ENCODE measurements at regions of chr5 and their contacts with region 1.

Region 1: GRCh38 chr5:35926389-35927051 is 11.9 kb downstream of the CAPSL start:
- DNase-seq: no peak
- ATAC-seq: peak; percentile 76
- H3K4me3 Mint-ChIP-seq: no peak overlapping the region
- H3K27ac Mint-ChIP-seq: no peak overlapping the region
- H3K4me1 Mint-ChIP-seq: peaks cover 7% of the 10 kb centered on the region
- H3K27me3 Mint-ChIP-seq: peaks cover 21% of the 10 kb centered on the region
- CTCF ChIP-seq: peak; percentile 59

Region 2: GRCh38 chr5:34474573-34475021 is 1451.9 kb before region 1 on chr5:
- CTCF ChIA-PET with region 1: no interaction called
- POLR2A ChIA-PET with region 1: no interaction called
- intact Hi-C with region 1: loop called (anchors 2 kb)
- DNase-seq: no peak
- ATAC-seq: peak; percentile 70
- H3K4me3 Mint-ChIP-seq: no peak overlapping the region
- H3K27ac Mint-ChIP-seq: no peak overlapping the region
- H3K4me1 Mint-ChIP-seq: no peaks in the 10 kb centered on the region
- H3K27me3 Mint-ChIP-seq: peaks cover 8% of the 10 kb centered on the region
- CTCF ChIP-seq: peak; percentile 88

Region 3: DNA sequence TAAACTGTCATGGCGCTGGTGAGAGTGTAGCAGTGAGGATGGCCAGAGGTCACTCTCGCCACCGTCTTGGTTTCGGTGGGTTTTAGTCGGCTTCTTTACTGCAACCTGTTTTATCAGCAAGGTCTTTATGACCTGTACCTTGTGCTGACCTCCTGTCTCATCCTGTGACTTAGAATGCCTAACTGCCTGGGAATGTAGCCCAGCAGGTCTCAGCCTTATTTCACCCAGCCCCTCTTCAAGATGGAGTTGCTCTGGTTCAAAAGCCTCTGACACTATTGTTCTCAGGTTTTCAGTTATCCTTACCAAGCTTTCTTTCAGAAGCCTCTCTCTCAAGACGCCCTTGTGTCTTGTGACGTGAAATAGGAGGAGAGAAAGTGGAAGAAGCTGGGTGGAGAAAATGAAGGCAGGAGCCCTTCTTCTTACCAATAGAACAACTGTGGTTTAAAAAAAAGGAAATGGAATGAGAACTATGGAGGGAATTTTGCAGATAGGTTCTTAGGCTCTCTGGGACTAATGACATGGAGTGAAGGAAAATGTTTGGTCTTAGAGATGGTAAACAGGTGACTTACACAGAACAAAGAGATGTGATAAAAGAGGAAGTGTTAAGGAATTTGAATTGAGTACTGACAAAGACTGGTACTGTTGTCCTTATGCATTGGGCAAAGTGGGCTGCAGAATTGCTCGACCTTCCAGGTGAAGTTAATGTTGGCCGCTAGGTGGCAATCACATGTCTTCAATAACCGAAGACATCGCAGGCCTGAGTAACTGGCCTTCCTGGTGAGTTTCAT is 1403.7 kb before region 1 on chr5:
- CTCF ChIA-PET with region 1: interaction called, 6 read pairs
- POLR2A ChIA-PET with region 1: no interaction called
- intact Hi-C with region 1: loop called (anchors 1 kb)
- DNase-seq: no peak
- ATAC-seq: peak; percentile 71
- H3K4me3 Mint-ChIP-seq: no peak overlapping the region
- H3K27ac Mint-ChIP-seq: no peak overlapping the region
- H3K4me1 Mint-ChIP-seq: peaks cover 2% of the 10 kb centered on the region
- H3K27me3 Mint-ChIP-seq: no peaks in the 10 kb centered on the region
- CTCF ChIP-seq: no peak

Region 4: DNA sequence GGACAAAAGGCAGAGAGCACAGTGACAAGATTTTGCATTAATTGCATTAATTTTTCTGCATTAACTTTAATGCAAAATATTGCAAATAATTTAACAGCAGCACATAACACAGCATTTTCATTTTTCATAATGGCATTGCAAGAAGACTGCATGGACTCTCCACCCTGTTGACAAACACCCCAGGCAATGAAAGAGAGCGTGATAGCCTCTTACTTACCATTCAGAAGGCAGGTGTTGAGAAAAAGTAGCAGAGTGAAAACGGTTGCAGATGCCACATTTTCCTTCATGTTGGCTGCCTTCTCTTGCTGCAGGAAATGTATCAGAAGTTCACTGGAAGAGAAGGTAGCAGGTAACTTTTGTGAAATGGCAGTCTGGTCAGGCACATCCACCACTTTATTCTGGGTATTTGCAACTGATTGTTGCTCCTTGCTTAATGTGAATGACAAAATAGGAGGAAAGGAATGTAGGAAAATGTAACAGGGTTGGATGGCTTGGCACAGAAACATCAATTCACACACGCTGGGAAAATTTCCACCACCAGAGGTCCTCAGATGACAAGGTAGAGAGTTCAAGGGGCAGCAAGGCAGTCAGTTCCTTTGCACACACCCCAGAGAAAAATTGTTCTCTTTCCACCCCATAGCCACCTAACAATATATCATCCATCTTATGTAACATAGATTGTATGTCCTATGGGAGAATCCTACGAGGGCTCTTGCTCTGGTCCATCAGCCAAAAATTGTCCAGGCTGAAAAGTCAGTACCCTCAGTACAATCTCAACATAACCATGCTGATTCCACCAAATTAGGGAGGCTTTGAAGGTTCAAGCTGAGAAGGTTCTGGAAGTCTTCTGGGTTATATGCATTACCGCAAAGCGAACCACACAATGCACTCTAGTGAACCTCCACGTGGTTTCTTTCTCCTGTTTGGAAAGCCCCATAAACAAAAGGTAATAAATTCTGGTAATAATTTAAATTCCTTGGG is 836.9 kb before region 1 on chr5:
- CTCF ChIA-PET with region 1: interaction called, 30 read pairs
- POLR2A ChIA-PET with region 1: no interaction called
- intact Hi-C with region 1: no loop called
- DNase-seq: no peak
- ATAC-seq: no peak
- H3K4me3 Mint-ChIP-seq: no peak overlapping the region
- H3K27ac Mint-ChIP-seq: no peak overlapping the region
- H3K4me1 Mint-ChIP-seq: no peaks in the 10 kb centered on the region
- H3K27me3 Mint-ChIP-seq: peaks cover 3% of the 10 kb centered on the region
- CTCF ChIP-seq: peak; percentile 59

Region 5: DNA sequence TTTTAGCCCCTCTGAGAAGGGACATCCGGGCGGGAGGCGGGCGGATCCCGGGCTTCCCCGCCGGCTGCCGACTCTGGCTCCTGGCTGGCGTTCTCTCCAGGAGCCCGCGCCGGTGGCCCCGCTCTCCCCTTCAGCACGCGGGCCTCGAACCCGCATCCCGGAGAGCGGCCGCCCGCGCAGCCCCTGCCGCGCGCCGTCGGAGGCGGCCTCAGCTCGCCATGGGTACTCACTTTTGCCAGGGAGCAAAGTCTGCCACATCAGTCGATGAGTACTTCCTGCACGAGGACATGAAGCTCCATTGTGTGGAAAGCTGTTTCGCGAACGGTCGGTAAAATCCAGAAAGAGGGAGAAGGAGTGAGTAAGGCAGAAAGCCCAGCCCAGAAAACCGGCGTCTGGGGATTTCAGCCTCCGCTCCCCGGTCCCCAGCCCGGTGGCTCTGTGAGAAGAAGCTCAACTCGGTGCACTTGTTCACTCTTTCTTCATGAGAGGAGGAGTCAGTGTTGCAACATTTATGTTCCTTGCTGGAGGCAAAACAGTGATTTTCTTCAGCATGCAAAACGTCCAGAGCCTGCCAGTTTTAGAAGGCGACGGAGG is 696.4 kb before region 1 on chr5 and contains the start of gene PRLR:
- CTCF ChIA-PET with region 1: no interaction called
- POLR2A ChIA-PET with region 1: no interaction called
- intact Hi-C with region 1: loop called (anchors 1 kb)
- DNase-seq: no peak
- ATAC-seq: peak; percentile 35
- H3K4me3 Mint-ChIP-seq: peak within 1 kb of the TSS; percentile 84
- H3K27ac Mint-ChIP-seq: peak within 1 kb of the TSS; percentile 62
- H3K4me1 Mint-ChIP-seq: peaks cover 15% of the 10 kb centered on the region
- H3K27me3 Mint-ChIP-seq: peaks cover 43% of the 10 kb centered on the region
- CTCF ChIP-seq: no peak
- total RNA-seq, gene PRLR: 2.3 and 3.7 TPM in 2 replicates

Region 6: GRCh38 chr5:35651002-35651756 is 275.3 kb before region 1 on chr5:
- CTCF ChIA-PET with region 1: interaction called, 22 read pairs
- POLR2A ChIA-PET with region 1: no interaction called
- intact Hi-C with region 1: loop called (anchors 1 kb)
- DNase-seq: no peak
- ATAC-seq: no peak
- H3K4me3 Mint-ChIP-seq: no peak overlapping the region
- H3K27ac Mint-ChIP-seq: no peak overlapping the region
- H3K4me1 Mint-ChIP-seq: no peaks in the 10 kb centered on the region
- H3K27me3 Mint-ChIP-seq: no peaks in the 10 kb centered on the region
- CTCF ChIP-seq: no peak

Region 7: DNA sequence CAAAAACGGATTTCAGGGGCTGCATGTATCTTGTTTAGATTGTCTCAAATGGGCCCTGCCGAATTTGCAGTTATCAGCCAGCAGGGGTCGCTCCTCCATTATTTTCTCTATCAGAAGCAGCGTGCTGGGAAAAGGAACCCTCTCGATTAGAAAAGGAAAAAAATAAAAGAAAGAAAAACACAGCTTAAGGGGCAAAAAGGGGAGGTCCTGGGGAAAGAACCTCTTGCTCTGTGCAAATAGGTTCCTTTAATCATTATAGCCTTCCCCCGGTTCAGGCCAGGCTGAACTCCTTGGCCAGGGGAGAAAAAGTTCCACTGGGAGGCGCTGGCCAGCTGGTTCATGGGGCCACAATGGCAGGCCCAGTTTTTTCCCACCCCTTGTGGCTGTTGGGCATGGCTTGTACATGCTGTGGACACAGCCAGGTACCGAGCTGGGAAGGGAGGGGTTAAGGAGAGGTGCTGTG is 36.9 kb after region 1 on chr5:
- CTCF ChIA-PET with region 1: no interaction called
- POLR2A ChIA-PET with region 1: no interaction called
- intact Hi-C with region 1: no loop called
- DNase-seq: no peak
- ATAC-seq: no peak
- H3K4me3 Mint-ChIP-seq: no peak overlapping the region
- H3K27ac Mint-ChIP-seq: no peak overlapping the region
- H3K4me1 Mint-ChIP-seq: no peaks in the 10 kb centered on the region
- H3K27me3 Mint-ChIP-seq: peaks cover 7% of the 10 kb centered on the region
- CTCF ChIP-seq: no peak